ENCODE measurements at regions of chr12 and their contacts with region 1.

Region 1: GRCh38 chr12:117874842-117875434 is 93.9 kb downstream of the KSR2 start:
- DNase-seq: peak; percentile 45
- ATAC-seq: peak; percentile 88
- H3K4me3 ChIP-seq: no peak overlapping the region
- H3K27ac ChIP-seq: no peak overlapping the region
- H3K4me1 ChIP-seq: no peaks in the 10 kb centered on the region
- H3K27me3 ChIP-seq: no peaks in the 10 kb centered on the region; a peak in 1 of 5 replicates
- CTCF ChIP-seq: peak; percentile 87
- EP300 ChIP-seq: no peak
- POLR2A ChIP-seq: no peak
- RAD21 ChIP-seq: peak; percentile 74

Region 2: DNA sequence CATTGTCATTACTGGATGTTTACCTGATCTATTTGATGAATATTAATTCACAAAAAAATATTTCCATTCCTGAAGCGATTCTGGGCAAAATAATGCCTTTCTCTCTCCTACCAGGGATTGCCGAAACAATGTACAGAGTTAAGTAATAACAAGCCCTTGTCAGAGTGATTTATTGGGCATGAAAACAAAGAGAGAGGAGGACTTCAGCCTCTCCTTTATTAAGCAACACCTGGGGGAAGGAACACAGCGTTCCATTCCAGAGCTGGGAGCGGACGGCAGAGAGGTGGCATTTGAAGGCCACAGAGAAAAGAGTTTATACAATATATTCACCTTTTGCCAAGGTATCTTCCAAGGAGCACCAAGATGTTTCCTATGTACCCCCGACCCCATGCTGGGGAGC is 71.9 kb before region 1 on chr12:
- CTCF ChIA-PET with region 1: no interaction called
- POLR2A ChIA-PET with region 1: no interaction called
- in situ Hi-C with region 1: no loop called
- intact Hi-C with region 1: no loop called
- DNase-seq: peak; percentile 71
- ATAC-seq: peak; percentile 89
- H3K4me3 ChIP-seq: no peak overlapping the region
- H3K27ac ChIP-seq: no peak overlapping the region
- H3K4me1 ChIP-seq: peaks cover 11% of the 10 kb centered on the region; the same call in 1 of the 2 replicates
- H3K27me3 ChIP-seq: peaks cover 0 to 34% of the 10 kb centered on the region in 2 experiments; a peak in 2 of 5 replicates
- CTCF ChIP-seq: no peak
- EP300 ChIP-seq: peak in 1 of 2 experiments; percentile 43; a peak in 1 of 4 replicates
- POLR2A ChIP-seq: no peak
- RAD21 ChIP-seq: no peak

Region 3: GRCh38 chr12:117936722-117937484 is 62.0 kb after region 1 on chr12:
- CTCF ChIA-PET with region 1: no interaction called
- POLR2A ChIA-PET with region 1: no interaction called
- in situ Hi-C with region 1: no loop called
- intact Hi-C with region 1: no loop called
- DNase-seq: no peak
- ATAC-seq: no peak
- H3K4me3 ChIP-seq: no peak overlapping the region
- H3K27ac ChIP-seq: no peak overlapping the region
- H3K4me1 ChIP-seq: no peaks in the 10 kb centered on the region
- H3K27me3 ChIP-seq: no peaks in the 10 kb centered on the region; a peak in 1 of 5 replicates
- CTCF ChIP-seq: no peak
- EP300 ChIP-seq: no peak
- POLR2A ChIP-seq: no peak
- RAD21 ChIP-seq: no peak

Region 4: GRCh38 chr12:118016424-118017264 is 141.7 kb after region 1 on chr12 and contains the start of gene RFC5:
- CTCF ChIA-PET with region 1: no interaction called
- POLR2A ChIA-PET with region 1: no interaction called
- in situ Hi-C with region 1: no loop called
- intact Hi-C with region 1: loop called (anchors 5 kb)
- DNase-seq: peak; percentile 96
- ATAC-seq: peak; percentile 97
- H3K4me3 ChIP-seq: peak within 1 kb of the TSS; percentile 72 to 90 (median 89)
- H3K27ac ChIP-seq: peak within 1 kb of the TSS; percentile 75
- H3K4me1 ChIP-seq: peaks cover 35% of the 10 kb centered on the region
- H3K27me3 ChIP-seq: no peaks in the 10 kb centered on the region
- CTCF ChIP-seq: 0 out of 2 replicates have a peak, but pooled peaks have one; percentile 9
- EP300 ChIP-seq: no peak
- POLR2A ChIP-seq: peak; percentile 88 to 92
- RAD21 ChIP-seq: no peak
- total RNA-seq, gene RFC5: 51.4 and 66.2 TPM in 2 replicates

Region 5: DNA sequence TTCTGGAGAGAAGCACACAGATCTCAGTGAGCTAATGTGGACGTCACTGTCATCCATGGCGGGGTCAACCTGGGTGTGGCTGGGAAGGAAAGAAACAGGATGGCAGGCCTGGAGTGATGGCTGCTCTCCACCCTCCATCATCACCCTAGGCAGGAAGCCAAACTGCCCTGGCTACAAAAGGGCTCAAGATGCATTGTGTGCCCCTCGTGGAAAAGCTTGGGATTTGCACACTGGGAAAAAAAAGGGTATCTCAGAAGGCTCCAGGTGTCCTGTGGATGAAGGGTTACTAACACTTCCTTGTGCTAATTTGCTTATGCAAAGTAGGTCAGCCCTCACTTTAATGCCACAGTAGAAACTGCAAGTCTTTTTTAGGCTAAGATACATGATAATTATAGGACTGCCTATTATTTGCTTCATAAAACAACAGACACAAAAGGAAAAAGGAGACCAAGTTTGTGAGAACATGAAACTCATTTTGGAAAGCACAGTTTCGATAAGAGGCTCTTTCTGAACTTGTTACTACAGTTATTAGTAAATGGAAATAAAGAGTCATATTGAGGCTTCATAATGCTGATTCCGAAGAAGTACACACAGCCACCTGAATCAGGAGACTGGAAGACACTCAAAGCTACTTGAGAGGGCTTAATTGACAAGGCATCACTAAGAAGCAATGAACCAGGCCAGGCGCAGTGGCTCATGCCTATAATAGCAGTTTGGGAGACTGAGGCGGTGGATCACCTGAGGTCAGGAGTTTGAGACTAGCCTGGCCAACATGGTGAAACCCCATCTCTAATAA is 160.5 kb after region 1 on chr12:
- CTCF ChIA-PET with region 1: interaction called, 17 read pairs
- POLR2A ChIA-PET with region 1: no interaction called
- in situ Hi-C with region 1: loop called (anchors 5 kb)
- intact Hi-C with region 1: loop called (anchors 1 kb)
- DNase-seq: no peak
- ATAC-seq: peak; percentile 52
- H3K4me3 ChIP-seq: no peak overlapping the region
- H3K27ac ChIP-seq: no peak overlapping the region
- H3K4me1 ChIP-seq: peaks cover 15% of the 10 kb centered on the region
- H3K27me3 ChIP-seq: no peaks in the 10 kb centered on the region
- CTCF ChIP-seq: no peak
- EP300 ChIP-seq: no peak
- POLR2A ChIP-seq: no peak
- RAD21 ChIP-seq: no peak

Region 6: DNA sequence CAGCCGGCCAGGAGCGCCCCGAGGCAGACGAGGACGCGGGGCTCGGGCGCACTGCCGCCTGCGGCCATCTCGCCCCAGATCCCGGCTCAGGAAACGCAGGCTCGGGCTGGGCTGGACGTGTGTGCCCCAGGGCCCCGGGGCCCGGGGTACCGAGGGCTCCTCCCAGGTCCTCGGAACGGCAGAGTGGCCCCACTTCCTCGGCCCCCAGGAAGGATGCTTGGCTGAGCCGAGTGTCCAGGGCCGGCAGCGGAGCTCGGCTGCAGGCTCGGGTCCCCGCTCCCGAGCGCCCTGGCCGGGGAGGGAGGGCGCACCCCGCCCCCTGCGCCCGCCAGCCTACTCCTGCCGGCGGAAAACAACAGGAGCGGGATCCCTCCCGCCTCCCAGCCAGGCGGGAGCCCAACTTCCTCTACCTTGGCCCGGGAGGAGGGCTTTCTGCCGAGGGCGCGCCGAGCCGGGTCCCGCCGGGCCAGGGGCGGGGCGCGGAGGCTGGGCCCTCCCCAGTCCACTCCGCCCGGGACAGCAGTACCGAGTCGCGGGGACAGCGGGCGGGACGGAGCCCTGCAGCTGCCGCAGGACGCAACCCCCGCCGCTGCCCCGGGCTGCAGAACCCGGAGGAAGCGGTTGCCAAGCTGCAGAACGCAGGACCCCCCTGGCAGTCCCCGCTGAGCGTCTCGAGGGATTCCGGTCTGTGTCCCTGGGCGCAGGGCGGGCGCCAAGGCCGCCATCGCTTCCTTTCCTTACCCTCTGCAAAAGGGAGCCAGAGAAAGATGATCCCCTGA is 228.9 kb after region 1 on chr12 and contains the start of gene VSIG10:
- CTCF ChIA-PET with region 1: no interaction called
- POLR2A ChIA-PET with region 1: no interaction called
- in situ Hi-C with region 1: no loop called
- intact Hi-C with region 1: loop called (anchors 5 kb)
- DNase-seq: peak; percentile 71
- ATAC-seq: peak; percentile 91
- H3K4me3 ChIP-seq: peak within 1 kb of the TSS; percentile 82 to 91 (median 85)
- H3K27ac ChIP-seq: peak within 1 kb of the TSS; percentile 79
- H3K4me1 ChIP-seq: peaks cover 41% of the 10 kb centered on the region
- H3K27me3 ChIP-seq: no peaks in the 10 kb centered on the region
- CTCF ChIP-seq: no peak; the same call in 1 of the 2 replicates
- EP300 ChIP-seq: no peak; a peak in 1 of 4 replicates
- POLR2A ChIP-seq: peak; percentile 46 to 73
- RAD21 ChIP-seq: peak; percentile 46; the same call in 1 of the 2 replicates
- total RNA-seq, gene VSIG10: 35.6 and 42.5 TPM in 2 replicates

Measured in HepG2 (cell line).